Left ventricle myocardium inferior (tissue), 1 donor: ENCODE measurements at regions of chr4 and their contacts with region 1.

Region 1: DNA sequence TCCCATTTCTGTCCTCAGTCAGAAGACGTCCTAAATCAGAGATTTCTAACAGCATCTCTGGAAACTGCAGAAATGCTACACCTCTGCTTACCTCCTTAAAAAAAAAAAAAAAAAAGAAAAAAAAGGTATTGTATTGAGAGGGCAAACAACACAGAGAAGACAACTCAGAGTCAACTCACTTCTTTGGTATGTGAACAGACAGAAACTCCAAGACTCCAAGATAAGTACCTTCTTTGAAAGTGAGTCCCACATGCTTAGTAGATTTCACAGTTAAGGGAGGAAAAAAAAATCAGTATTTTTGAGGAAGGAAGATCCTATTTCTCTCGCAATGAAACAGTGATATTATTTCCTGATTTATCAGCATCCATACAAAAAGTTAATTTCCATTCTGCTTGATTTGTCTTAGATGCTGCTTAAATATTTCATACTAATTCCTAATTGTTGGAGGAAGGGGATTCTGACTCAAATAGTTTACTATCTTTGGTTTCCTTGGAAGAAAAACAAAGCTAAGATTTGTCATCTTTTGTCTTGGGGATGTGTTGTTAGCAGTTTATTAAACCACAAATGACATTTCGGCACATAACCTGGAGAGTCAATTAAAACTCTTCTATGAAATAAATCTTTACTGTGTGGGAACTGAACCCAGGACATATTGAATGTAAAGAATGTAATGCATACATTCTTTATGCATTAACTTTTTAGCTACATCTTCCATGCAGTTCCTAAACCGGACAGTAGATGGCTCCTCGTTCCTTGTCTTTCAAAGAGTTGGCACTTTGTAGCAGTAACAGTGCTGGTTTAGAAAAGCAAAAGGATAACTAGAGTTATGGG is 4.7 kb downstream of the RASGEF1B start:
- DNase-seq: no peak
- H3K4me3 ChIP-seq: no peak overlapping the region
- H3K27ac ChIP-seq: no peak overlapping the region
- H3K4me1 ChIP-seq: peaks cover 39% of the 10 kb centered on the region
- H3K27me3 ChIP-seq: no peaks in the 10 kb centered on the region
- CTCF ChIP-seq: peak; percentile 95

Region 2: GRCh38 chr4:80709082-80709869 is 757.8 kb before region 1 on chr4:
- intact Hi-C with region 1: no loop called
- DNase-seq: no peak
- H3K4me3 ChIP-seq: no peak overlapping the region
- H3K27ac ChIP-seq: no peak overlapping the region
- H3K4me1 ChIP-seq: no peaks in the 10 kb centered on the region
- H3K27me3 ChIP-seq: no peaks in the 10 kb centered on the region
- CTCF ChIP-seq: no peak

Region 3: DNA sequence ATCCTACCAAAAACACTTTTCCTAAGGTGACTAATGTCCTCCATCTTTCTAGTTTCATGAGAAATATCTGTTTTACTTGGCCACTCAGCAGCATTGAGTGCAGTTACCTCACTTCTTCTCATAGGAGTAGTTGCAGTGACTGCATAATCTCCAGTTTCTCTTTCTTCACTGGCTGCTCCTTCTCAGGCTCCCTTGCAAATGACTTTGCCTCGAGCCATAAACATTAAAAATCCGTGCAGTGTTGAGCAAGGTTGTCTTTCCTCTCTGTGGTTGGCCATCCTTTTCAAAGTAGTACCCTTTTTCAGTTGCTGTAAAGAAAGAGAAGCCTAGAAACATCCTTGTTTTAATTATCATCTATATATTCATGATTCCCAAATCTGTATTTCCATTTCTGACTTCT is 241.8 kb before region 1 on chr4:
- intact Hi-C with region 1: no loop called
- DNase-seq: no peak
- H3K4me3 ChIP-seq: no peak overlapping the region
- H3K27ac ChIP-seq: no peak overlapping the region
- H3K4me1 ChIP-seq: no peaks in the 10 kb centered on the region
- H3K27me3 ChIP-seq: no peaks in the 10 kb centered on the region
- CTCF ChIP-seq: no peak

Region 4: GRCh38 chr4:81628489-81628888 is 161.4 kb after region 1 on chr4:
- intact Hi-C with region 1: loop called (anchors 10 kb)
- DNase-seq: no peak
- H3K4me3 ChIP-seq: no peak overlapping the region
- H3K27ac ChIP-seq: no peak overlapping the region
- H3K4me1 ChIP-seq: peaks cover 12% of the 10 kb centered on the region
- H3K27me3 ChIP-seq: no peaks in the 10 kb centered on the region
- CTCF ChIP-seq: no peak

Region 5: GRCh38 chr4:81747242-81747930 is 280.3 kb after region 1 on chr4:
- intact Hi-C with region 1: no loop called
- DNase-seq: no peak
- H3K4me3 ChIP-seq: no peak overlapping the region
- H3K27ac ChIP-seq: no peak overlapping the region
- H3K4me1 ChIP-seq: no peaks in the 10 kb centered on the region
- H3K27me3 ChIP-seq: no peaks in the 10 kb centered on the region
- CTCF ChIP-seq: no peak

Region 6: DNA sequence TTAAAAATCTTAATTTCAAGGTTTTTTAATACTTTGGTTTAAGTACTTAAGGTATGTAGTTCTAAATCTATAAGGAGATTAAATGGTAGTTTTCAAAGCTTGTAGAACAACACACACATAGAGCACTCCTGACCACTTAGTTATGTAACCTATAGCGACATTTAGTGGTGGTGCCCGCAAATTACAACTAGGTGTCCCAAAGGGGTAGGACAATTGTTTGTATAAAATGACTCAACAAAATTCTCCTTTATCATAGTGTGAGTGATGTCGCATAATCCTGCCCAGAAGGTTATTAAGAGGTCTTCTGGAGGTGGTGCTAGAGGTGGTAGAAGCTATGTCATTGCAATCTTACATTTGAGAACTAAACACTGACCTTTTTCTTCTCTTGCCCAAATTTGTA is 377.7 kb after region 1 on chr4:
- intact Hi-C with region 1: loop called (anchors 5 kb)
- DNase-seq: peak; percentile 49
- H3K4me3 ChIP-seq: no peak overlapping the region
- H3K27ac ChIP-seq: no peak overlapping the region
- H3K4me1 ChIP-seq: peaks cover 11% of the 10 kb centered on the region
- H3K27me3 ChIP-seq: peaks cover 5% of the 10 kb centered on the region
- CTCF ChIP-seq: peak; percentile 84